CD4-positive, alpha-beta T cell (primary cell): ENCODE measurements at regions of chr20 and their contacts with region 1.

Region 1: DNA sequence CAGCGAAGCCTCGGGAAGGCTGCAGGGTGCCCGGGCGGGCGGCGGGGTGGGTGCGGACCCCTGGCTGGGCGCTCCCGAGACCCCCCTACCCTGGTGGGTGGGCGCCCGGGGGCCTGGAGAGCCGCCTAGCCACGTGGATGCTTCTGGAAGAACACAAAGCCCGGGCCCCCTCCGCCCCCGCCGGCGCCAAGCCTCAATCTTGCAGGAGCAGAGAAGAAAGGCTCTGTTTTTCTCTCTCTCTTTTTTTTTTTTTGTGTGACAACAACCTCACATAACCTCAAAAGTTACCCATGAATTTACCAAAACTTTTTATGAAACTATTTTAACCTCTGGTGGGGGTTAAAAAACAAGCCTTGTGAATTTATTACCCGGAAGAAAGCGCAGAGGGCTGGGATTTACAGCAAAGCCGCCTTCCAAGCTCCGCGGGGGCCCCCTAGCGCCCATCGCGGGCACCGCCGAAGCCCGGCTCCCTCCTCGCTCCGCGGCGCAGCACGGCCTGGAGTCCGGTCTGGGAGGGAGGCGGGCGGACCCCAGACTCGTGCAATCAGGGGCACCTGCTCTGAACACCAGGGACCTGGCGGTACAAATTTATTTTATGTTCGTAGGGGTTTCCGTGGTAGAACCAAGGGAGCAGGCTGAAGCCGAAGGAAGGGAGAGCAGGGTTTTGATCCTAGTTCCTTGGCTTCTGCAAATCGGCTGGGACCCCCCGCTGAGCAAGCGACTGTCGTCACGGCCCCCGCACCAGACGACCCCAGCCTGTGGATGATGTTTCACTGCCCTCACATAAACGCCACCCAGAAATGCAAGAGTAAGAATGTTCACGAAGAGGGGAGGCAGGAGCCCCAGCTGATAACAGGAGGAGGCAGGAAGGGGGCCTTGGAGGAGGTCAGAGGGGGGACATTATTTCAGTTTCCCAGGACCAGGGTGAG is 58.9 kb downstream of the ZNF831 start:
- DNase-seq: peak; percentile 72 to 87 (median 78)
- ATAC-seq: peak; percentile 94
- H3K4me3 ChIP-seq: peak overlapping the region; percentile 46
- H3K4me3 Mint-ChIP-seq: peak overlapping the region; percentile 86
- H3K27ac ChIP-seq: no peak overlapping the region
- H3K27ac Mint-ChIP-seq: peak overlapping the region; percentile 87
- H3K4me1 ChIP-seq: peaks cover 16% of the 10 kb centered on the region
- H3K4me1 Mint-ChIP-seq: peaks cover 51% of the 10 kb centered on the region
- H3K27me3 ChIP-seq: no peaks in the 10 kb centered on the region
- H3K27me3 Mint-ChIP-seq: no peaks in the 10 kb centered on the region
- CTCF ChIP-seq: peak; percentile 93

Region 2: GRCh38 chr20:59149651-59150504 is 72.6 kb before region 1 on chr20:
- CTCF ChIA-PET with region 1: no interaction called
- POLR2A ChIA-PET with region 1: no interaction called
- intact Hi-C with region 1: loop called in 1 of 2 experiments (anchors 5 kb)
- DNase-seq: peak; percentile 52 to 94 (median 72)
- ATAC-seq: peak; percentile 79
- H3K4me3 ChIP-seq: peak overlapping the region; percentile 21
- H3K4me3 Mint-ChIP-seq: peak overlapping the region; percentile 82
- H3K27ac ChIP-seq: peak overlapping the region; percentile 95 to 96
- H3K27ac Mint-ChIP-seq: peak overlapping the region; percentile 97
- H3K4me1 ChIP-seq: peaks cover 99% of the 10 kb centered on the region
- H3K4me1 Mint-ChIP-seq: peaks cover 95% of the 10 kb centered on the region
- H3K27me3 ChIP-seq: no peaks in the 10 kb centered on the region
- H3K27me3 Mint-ChIP-seq: no peaks in the 10 kb centered on the region
- CTCF ChIP-seq: no peak

Region 3: GRCh38 chr20:59207742-59208357 is 14.7 kb before region 1 on chr20:
- CTCF ChIA-PET with region 1: interaction called, 16 read pairs
- POLR2A ChIA-PET with region 1: interaction called, 7 read pairs
- intact Hi-C with region 1: no loop called
- DNase-seq: peak; percentile 73 to 90 (median 81)
- ATAC-seq: peak; percentile 96
- H3K4me3 ChIP-seq: no peak overlapping the region
- H3K4me3 Mint-ChIP-seq: no peak overlapping the region
- H3K27ac ChIP-seq: no peak overlapping the region
- H3K27ac Mint-ChIP-seq: peak overlapping the region; percentile 77
- H3K4me1 ChIP-seq: peaks cover 27% of the 10 kb centered on the region
- H3K4me1 Mint-ChIP-seq: peaks cover 51% of the 10 kb centered on the region
- H3K27me3 ChIP-seq: no peaks in the 10 kb centered on the region
- H3K27me3 Mint-ChIP-seq: no peaks in the 10 kb centered on the region
- CTCF ChIP-seq: peak; percentile 78

Region 4: GRCh38 chr20:59403261-59403961 is 180.9 kb after region 1 on chr20:
- CTCF ChIA-PET with region 1: interaction called, 5 read pairs
- POLR2A ChIA-PET with region 1: interaction called, 9 read pairs
- intact Hi-C with region 1: loop called (anchors 1 kb)
- DNase-seq: peak; percentile 52 to 83 (median 72)
- ATAC-seq: peak; percentile 71
- H3K4me3 ChIP-seq: peak overlapping the region; percentile 25
- H3K4me3 Mint-ChIP-seq: peak overlapping the region; percentile 76
- H3K27ac ChIP-seq: no peak overlapping the region
- H3K27ac Mint-ChIP-seq: no peak overlapping the region
- H3K4me1 ChIP-seq: peaks cover 21% of the 10 kb centered on the region
- H3K4me1 Mint-ChIP-seq: no peaks in the 10 kb centered on the region
- H3K27me3 ChIP-seq: peaks cover 27 to 41% of the 10 kb centered on the region in 2 experiments
- H3K27me3 Mint-ChIP-seq: no peaks in the 10 kb centered on the region
- CTCF ChIP-seq: peak; percentile 99